Sigmoid colon (tissue), 7 donors: ENCODE measurements at regions of chr1 and their contacts with region 1.

Region 1: DNA sequence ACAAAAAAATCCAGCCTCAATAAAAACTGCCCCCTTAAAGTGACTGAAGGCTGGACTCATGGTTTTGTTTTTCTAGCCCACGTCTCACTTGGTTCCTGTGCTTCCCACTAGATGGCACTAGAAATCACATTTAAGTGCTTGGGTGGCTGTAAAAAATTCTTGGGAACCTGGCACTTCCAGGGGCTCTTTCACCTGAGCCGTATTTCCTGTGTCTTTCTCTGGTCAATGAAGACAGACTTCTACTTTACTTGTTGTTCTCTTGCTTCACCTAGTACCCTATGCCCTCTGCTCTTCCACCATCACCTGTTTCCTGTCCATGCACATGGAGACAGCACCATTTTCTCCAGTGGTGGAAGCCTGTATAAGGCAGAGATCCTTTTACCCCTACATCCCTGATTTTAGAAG is 20.0 kb downstream of the METTL13 start:
- DNase-seq: no peak
- H3K4me3 ChIP-seq: no peak overlapping the region
- H3K27ac ChIP-seq: no peak overlapping the region
- H3K4me1 ChIP-seq: no peaks in the 10 kb centered on the region
- H3K27me3 ChIP-seq: no peaks in the 10 kb centered on the region
- CTCF ChIP-seq: peak; percentile 36 to 78 (median 57)
- EP300 ChIP-seq: no peak
- POLR2A ChIP-seq: no peak

Region 2: DNA sequence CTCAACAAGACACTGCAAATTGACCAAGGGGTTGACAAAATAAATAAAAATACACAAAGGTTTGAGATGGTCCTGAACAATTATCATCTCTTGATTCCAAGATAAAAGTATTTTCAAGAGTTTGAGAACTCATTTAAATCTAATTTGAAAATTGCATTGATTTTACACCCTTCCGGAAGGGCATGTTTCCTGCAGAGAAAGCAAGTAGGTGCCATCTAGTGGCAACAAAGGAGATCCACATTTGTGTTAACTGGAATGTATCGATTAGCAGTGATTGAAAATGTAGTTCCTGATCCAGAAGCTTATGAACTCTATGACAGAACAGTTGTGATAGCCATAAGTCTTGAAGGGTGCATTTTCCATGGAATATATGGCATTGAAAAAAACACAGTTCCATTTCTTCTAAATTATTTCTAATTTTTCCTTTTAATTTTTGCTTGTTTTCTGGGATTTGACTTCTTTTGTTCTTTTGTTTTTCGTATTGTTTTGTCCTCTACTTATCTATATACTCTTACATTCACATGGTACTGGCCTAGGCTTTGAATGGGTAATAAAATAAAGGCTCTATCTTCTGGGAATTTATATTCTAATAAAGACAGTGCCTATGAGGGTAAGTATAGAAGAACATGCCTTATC is 183.5 kb after region 1 on chr1:
- intact Hi-C with region 1: loop called (anchors 2 kb)
- DNase-seq: no peak
- H3K4me3 ChIP-seq: no peak overlapping the region
- H3K27ac ChIP-seq: no peak overlapping the region
- H3K4me1 ChIP-seq: peaks cover 0 to 3% (median 0%) of the 10 kb centered on the region in 4 donors
- H3K27me3 ChIP-seq: no peaks in the 10 kb centered on the region
- CTCF ChIP-seq: peak; percentile 54 to 71 (median 66)
- EP300 ChIP-seq: no peak
- POLR2A ChIP-seq: no peak